Naive thymus-derived CD4-positive, alpha-beta T cell (primary cell): ENCODE measurements at regions of chr1 and their contacts with region 1.

Region 1: GRCh38 chr1:59296358-59297256 is at the start of gene FGGY:
- DNase-seq: peak; percentile 71 to 85 (median 81)
- ATAC-seq: peak; percentile 93
- H3K4me3 ChIP-seq: peak within 1 kb of the TSS; percentile 73
- H3K4me3 Mint-ChIP-seq: peak within 1 kb of the TSS; percentile 77 to 95 (median 92)
- H3K27ac ChIP-seq: peak within 1 kb of the TSS; percentile 85
- H3K27ac Mint-ChIP-seq: peak within 1 kb of the TSS; percentile 83 to 96 (median 92)
- H3K4me1 ChIP-seq: peaks cover 7 to 11% of the 10 kb centered on the region in 2 donors
- H3K4me1 Mint-ChIP-seq: peaks cover 9 to 51% (median 27%) of the 10 kb centered on the region in 7 donors
- H3K27me3 ChIP-seq: no peaks in the 10 kb centered on the region
- H3K27me3 Mint-ChIP-seq: no peaks in the 10 kb centered on the region
- total RNA-seq, gene FGGY: 10.7 to 15.2 (median 13.9) TPM

Region 2: GRCh38 chr1:58739856-58740466 is 556.6 kb before region 1 on chr1:
- CTCF ChIA-PET with region 1: no interaction called
- POLR2A ChIA-PET with region 1: no interaction called
- intact Hi-C with region 1: loop called in 1 of 2 experiments (anchors 2 kb)
- DNase-seq: peak in 7 of 9 donors; percentile 36 to 68 (median 62)
- ATAC-seq: peak; percentile 70
- H3K4me3 ChIP-seq: no peak overlapping the region
- H3K4me3 Mint-ChIP-seq: no peak overlapping the region
- H3K27ac ChIP-seq: no peak overlapping the region
- H3K27ac Mint-ChIP-seq: no peak overlapping the region
- H3K4me1 ChIP-seq: no peaks in the 10 kb centered on the region
- H3K4me1 Mint-ChIP-seq: peaks cover 0 to 14% (median 0%) of the 10 kb centered on the region in 7 donors
- H3K27me3 ChIP-seq: no peaks in the 10 kb centered on the region
- H3K27me3 Mint-ChIP-seq: peaks cover 0 to 5% (median 3%) of the 10 kb centered on the region in 5 donors

Region 3: GRCh38 chr1:58816072-58816746 is 480.4 kb before region 1 on chr1:
- CTCF ChIA-PET with region 1: no interaction called
- POLR2A ChIA-PET with region 1: no interaction called
- intact Hi-C with region 1: loop called (anchors 1 to 2 kb)
- DNase-seq: peak; percentile 66 to 84 (median 71)
- ATAC-seq: peak; percentile 88
- H3K4me3 ChIP-seq: peak overlapping the region; percentile 89
- H3K4me3 Mint-ChIP-seq: peak overlapping the region; percentile 88 to 94 (median 92)
- H3K27ac ChIP-seq: peak overlapping the region; percentile 77
- H3K27ac Mint-ChIP-seq: peak overlapping the region; percentile 77 to 95 (median 90)
- H3K4me1 ChIP-seq: peaks cover 27 to 34% of the 10 kb centered on the region in 2 donors
- H3K4me1 Mint-ChIP-seq: peaks cover 19 to 49% (median 41%) of the 10 kb centered on the region in 7 donors
- H3K27me3 ChIP-seq: no peaks in the 10 kb centered on the region
- H3K27me3 Mint-ChIP-seq: peaks cover 0 to 5% (median 0%) of the 10 kb centered on the region in 5 donors

Region 4: GRCh38 chr1:58941471-58942289 is 354.9 kb before region 1 on chr1:
- CTCF ChIA-PET with region 1: no interaction called
- POLR2A ChIA-PET with region 1: no interaction called
- intact Hi-C with region 1: loop called (anchors 5 to 10 kb)
- DNase-seq: peak in 6 of 9 donors; percentile 33 to 65 (median 57)
- ATAC-seq: peak; percentile 83
- H3K4me3 ChIP-seq: peak overlapping the region; percentile 40
- H3K4me3 Mint-ChIP-seq: peak overlapping the region; percentile 60 to 88 (median 80)
- H3K27ac ChIP-seq: peak overlapping the region; percentile 39
- H3K27ac Mint-ChIP-seq: peak overlapping the region; percentile 37 to 89 (median 77)
- H3K4me1 ChIP-seq: peaks cover 48 to 61% of the 10 kb centered on the region in 2 donors
- H3K4me1 Mint-ChIP-seq: peaks cover 60 to 87% (median 74%) of the 10 kb centered on the region in 7 donors
- H3K27me3 ChIP-seq: no peaks in the 10 kb centered on the region
- H3K27me3 Mint-ChIP-seq: no peaks in the 10 kb centered on the region

Region 5: DNA sequence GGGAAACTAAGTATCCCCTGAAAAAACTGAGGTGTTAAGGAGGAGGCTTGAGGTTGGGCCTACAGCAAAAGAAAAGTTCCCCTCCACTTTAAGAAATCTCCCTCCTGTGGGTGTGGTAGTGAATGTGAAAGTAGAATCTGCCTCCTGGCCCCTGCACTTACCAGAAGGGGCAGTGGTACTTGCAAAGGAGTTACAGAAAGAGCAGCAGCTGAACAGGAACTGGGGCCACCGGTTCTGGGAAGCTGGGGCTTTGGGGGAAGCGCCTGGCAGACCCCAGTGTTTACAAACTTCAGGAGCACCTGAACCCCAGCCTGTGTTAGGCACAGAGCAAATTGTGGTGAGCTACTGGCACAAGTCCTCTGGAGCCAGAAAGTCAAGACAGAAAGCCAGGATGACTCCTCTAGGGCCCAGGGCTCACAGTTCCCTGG is 249.9 kb before region 1 on chr1:
- CTCF ChIA-PET with region 1: no interaction called
- POLR2A ChIA-PET with region 1: no interaction called
- intact Hi-C with region 1: loop called (anchors 10 kb)
- DNase-seq: peak in 7 of 9 donors; percentile 18 to 49 (median 34)
- ATAC-seq: peak; percentile 84
- H3K4me3 ChIP-seq: no peak overlapping the region
- H3K4me3 Mint-ChIP-seq: peak overlapping the region in 8 of 10 donors; percentile 14 to 82 (median 34)
- H3K27ac ChIP-seq: no peak overlapping the region
- H3K27ac Mint-ChIP-seq: peak overlapping the region; percentile 64 to 96 (median 77)
- H3K4me1 ChIP-seq: peaks cover 30% of the 10 kb centered on the region in 2 donors
- H3K4me1 Mint-ChIP-seq: peaks cover 26 to 65% (median 41%) of the 10 kb centered on the region in 7 donors
- H3K27me3 ChIP-seq: no peaks in the 10 kb centered on the region
- H3K27me3 Mint-ChIP-seq: no peaks in the 10 kb centered on the region

Region 6: GRCh38 chr1:59329412-59330053 is 32.9 kb after region 1 on chr1:
- CTCF ChIA-PET with region 1: no interaction called
- POLR2A ChIA-PET with region 1: no interaction called
- intact Hi-C with region 1: loop called in 1 of 2 experiments (anchors 2 kb)
- DNase-seq: no peak
- ATAC-seq: no peak
- H3K4me3 ChIP-seq: no peak overlapping the region
- H3K4me3 Mint-ChIP-seq: no peak overlapping the region
- H3K27ac ChIP-seq: no peak overlapping the region
- H3K27ac Mint-ChIP-seq: no peak overlapping the region
- H3K4me1 ChIP-seq: peaks cover 3 to 10% of the 10 kb centered on the region in 2 donors
- H3K4me1 Mint-ChIP-seq: peaks cover 5 to 38% (median 20%) of the 10 kb centered on the region in 7 donors
- H3K27me3 ChIP-seq: no peaks in the 10 kb centered on the region
- H3K27me3 Mint-ChIP-seq: no peaks in the 10 kb centered on the region

Region 7: DNA sequence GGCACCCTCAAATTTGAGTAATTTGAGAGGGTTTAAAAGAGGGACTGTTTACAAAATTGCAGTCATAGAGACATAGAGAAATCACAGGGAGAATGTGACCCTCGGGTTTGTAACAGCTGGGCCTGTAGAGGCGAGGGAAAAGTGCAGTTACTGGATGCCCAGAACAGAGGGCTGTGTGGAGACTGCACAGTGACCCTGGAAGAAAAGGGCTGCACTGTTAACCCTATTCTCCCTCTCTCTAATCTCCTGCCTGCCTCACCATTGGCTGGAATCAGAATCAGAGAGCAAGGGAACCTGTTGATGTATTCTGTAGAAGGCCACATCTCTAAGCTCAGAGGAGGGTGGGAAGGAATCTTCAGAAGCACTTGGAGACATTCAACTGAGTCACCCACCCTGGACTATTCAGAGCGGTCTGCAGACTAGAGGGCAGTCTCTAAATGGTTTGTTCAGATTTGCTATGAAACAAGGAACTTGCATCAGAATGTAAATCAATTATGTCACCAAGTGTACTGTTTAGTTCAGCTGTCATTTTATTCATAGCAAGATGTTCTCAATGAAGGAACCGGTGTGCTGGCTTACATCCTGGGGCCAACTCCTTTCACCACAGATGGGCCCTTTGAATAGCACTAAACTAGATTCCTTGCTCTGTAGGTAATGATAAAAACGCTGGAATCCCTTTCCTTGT is 385.9 kb after region 1 on chr1:
- CTCF ChIA-PET with region 1: no interaction called
- POLR2A ChIA-PET with region 1: no interaction called
- intact Hi-C with region 1: no loop called
- DNase-seq: no peak
- ATAC-seq: peak; percentile 62
- H3K4me3 ChIP-seq: no peak overlapping the region
- H3K4me3 Mint-ChIP-seq: no peak overlapping the region
- H3K27ac ChIP-seq: no peak overlapping the region
- H3K27ac Mint-ChIP-seq: no peak overlapping the region
- H3K4me1 ChIP-seq: no peaks in the 10 kb centered on the region
- H3K4me1 Mint-ChIP-seq: peaks cover 0 to 3% (median 0%) of the 10 kb centered on the region in 7 donors
- H3K27me3 ChIP-seq: no peaks in the 10 kb centered on the region
- H3K27me3 Mint-ChIP-seq: no peaks in the 10 kb centered on the region